Activated CD4-positive, alpha-beta T cell treated with anti-CD3 and anti-CD28 coated beads for 36 hours (primary cell): ENCODE measurements at regions of chr17 and their contacts with region 1.

Region 1: GRCh38 chr17:4004517-4005295 is 40.5 kb upstream of the ATP2A3 start:
- DNase-seq: peak; percentile 80
- ATAC-seq: peak; percentile 91
- H3K4me3 Mint-ChIP-seq: no peak overlapping the region
- H3K27ac Mint-ChIP-seq: no peak overlapping the region
- H3K4me1 Mint-ChIP-seq: peaks cover 6% of the 10 kb centered on the region
- H3K27me3 Mint-ChIP-seq: no peaks in the 10 kb centered on the region

Region 2: DNA sequence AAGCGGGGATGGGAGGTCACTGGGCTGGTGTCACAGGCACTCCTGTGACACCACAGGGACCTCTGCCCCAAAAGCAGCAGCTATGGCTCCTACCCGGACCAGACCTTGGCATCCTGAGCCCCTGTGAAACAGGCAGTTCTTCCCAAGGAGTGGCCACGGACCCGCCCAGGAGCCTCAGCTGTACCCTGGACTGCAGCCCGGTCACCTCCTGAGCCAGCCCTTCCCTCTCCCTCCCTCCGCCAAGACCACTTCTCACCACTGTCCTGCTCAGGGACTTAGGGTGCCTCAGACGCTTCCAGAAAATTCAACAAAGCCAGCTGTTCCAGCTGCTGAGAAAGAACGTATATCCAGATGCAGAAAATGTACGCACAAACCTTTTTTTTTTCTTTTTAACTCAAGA is 144.8 kb before region 1 on chr17:
- CTCF ChIA-PET with region 1: no interaction called
- POLR2A ChIA-PET with region 1: no interaction called
- intact Hi-C with region 1: loop called (anchors 1 to 2 kb)
- DNase-seq: no peak
- ATAC-seq: no peak
- H3K4me3 Mint-ChIP-seq: no peak overlapping the region
- H3K27ac Mint-ChIP-seq: no peak overlapping the region
- H3K4me1 Mint-ChIP-seq: no peaks in the 10 kb centered on the region
- H3K27me3 Mint-ChIP-seq: no peaks in the 10 kb centered on the region

Region 3: GRCh38 chr17:3865176-3865575 is 139.5 kb before region 1 on chr17:
- CTCF ChIA-PET with region 1: no interaction called
- POLR2A ChIA-PET with region 1: no interaction called
- intact Hi-C with region 1: loop called (anchors 1 to 2 kb)
- DNase-seq: no peak
- ATAC-seq: no peak
- H3K4me3 Mint-ChIP-seq: no peak overlapping the region
- H3K27ac Mint-ChIP-seq: no peak overlapping the region
- H3K4me1 Mint-ChIP-seq: no peaks in the 10 kb centered on the region
- H3K27me3 Mint-ChIP-seq: no peaks in the 10 kb centered on the region

Region 4: GRCh38 chr17:3935140-3935542 is 69.6 kb before region 1 on chr17:
- CTCF ChIA-PET with region 1: interaction called, 4 read pairs
- POLR2A ChIA-PET with region 1: no interaction called
- intact Hi-C with region 1: loop called in 1 of 2 experiments (anchors 1 kb)
- DNase-seq: peak; percentile 64
- ATAC-seq: peak; percentile 80
- H3K4me3 Mint-ChIP-seq: no peak overlapping the region
- H3K27ac Mint-ChIP-seq: no peak overlapping the region
- H3K4me1 Mint-ChIP-seq: no peaks in the 10 kb centered on the region
- H3K27me3 Mint-ChIP-seq: no peaks in the 10 kb centered on the region

Region 5: DNA sequence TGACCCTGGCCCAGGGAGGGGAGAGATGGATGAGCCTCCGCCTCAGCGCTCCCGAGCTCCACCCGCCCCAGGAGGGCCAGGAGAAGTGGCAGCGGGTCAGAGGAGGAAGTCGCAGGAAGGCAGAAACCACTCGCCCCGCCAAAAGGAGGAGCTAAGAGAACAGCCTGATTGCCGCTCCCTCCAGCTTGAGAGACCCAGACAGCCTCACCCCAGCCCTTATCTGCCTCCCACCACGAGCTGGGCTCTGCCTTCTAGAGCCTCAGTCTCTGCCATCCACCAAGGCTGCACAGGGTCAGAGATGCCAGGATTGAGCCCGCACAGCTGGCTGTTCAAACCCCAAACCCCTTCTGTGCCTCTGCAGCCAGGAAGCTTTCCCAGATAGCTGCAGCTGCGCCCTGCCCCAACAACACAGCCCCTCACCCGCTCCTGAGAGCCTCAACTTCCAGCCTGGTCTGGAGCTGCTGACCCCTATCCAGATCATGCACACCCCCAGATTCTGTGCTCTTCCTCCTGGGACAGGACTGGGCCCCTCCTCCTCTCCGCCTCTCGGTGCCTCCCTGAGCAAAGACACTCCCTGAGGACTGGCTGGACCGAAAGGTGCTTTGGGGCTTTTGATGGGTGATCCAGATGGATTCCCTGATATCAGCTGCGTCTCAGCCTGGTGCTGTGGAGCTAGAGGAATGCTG is 39.4 kb before region 1 on chr17:
- CTCF ChIA-PET with region 1: interaction called, 4 read pairs
- POLR2A ChIA-PET with region 1: interaction called, 3 read pairs
- intact Hi-C with region 1: loop called (anchors 1 to 5 kb)
- DNase-seq: peak; percentile 86
- ATAC-seq: peak; percentile 75
- H3K4me3 Mint-ChIP-seq: peak overlapping the region; percentile 81
- H3K27ac Mint-ChIP-seq: peak overlapping the region; percentile 93
- H3K4me1 Mint-ChIP-seq: peaks cover 40% of the 10 kb centered on the region
- H3K27me3 Mint-ChIP-seq: no peaks in the 10 kb centered on the region

Region 6: GRCh38 chr17:4054446-4054845 is 49.7 kb after region 1 on chr17:
- CTCF ChIA-PET with region 1: no interaction called
- POLR2A ChIA-PET with region 1: no interaction called
- intact Hi-C with region 1: no loop called
- DNase-seq: peak; percentile 22
- ATAC-seq: peak; percentile 98
- H3K4me3 Mint-ChIP-seq: no peak overlapping the region
- H3K27ac Mint-ChIP-seq: peak overlapping the region; percentile 61
- H3K4me1 Mint-ChIP-seq: peaks cover 14% of the 10 kb centered on the region
- H3K27me3 Mint-ChIP-seq: no peaks in the 10 kb centered on the region